ENCODE measurements at regions of chr1 and their contacts with region 1.

Region 1: DNA sequence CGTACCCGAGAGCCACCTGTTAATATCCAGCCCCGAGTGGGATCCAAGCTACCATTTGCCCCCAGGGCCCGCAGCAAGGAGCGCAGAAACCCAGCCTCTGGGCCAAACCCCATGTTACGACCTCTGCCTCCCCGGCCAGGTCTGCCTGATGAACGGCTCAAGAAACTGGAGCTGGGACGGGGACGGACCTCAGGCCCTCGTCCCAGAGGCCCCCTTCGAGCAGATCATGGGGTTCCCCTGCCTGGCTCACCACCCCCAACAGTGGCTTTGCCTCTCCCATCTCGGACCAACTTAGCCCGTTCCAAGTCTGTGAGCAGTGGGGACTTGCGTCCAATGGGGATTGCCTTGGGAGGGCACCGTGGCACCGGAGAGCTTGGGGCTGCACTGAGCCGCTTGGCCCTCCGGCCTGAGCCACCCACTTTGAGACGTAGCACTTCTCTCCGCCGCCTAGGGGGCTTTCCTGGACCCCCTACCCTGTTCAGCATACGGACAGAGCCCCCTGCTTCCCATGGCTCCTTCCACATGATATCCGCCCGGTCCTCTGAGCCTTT is 1.4 kb downstream of the USP21 start:
- DNase-seq: no peak
- ATAC-seq: no peak
- H3K4me3 ChIP-seq: no peak overlapping the region
- H3K27ac ChIP-seq: no peak overlapping the region
- H3K4me1 ChIP-seq: peaks cover 7% of the 10 kb centered on the region
- H3K27me3 ChIP-seq: no peaks in the 10 kb centered on the region
- CTCF ChIP-seq: no peak
- POLR2A ChIP-seq: no peak
- RAD21 ChIP-seq: no peak

Region 2: GRCh38 chr1:161238039-161238473 is 77.3 kb after region 1 on chr1 and contains the start of gene NR1I3:
- CTCF ChIA-PET with region 1: no interaction called
- POLR2A ChIA-PET with region 1: no interaction called
- dilution Hi-C with region 1: no loop called
- in situ Hi-C with region 1: no loop called
- intact Hi-C with region 1: no loop called
- DNase-seq: no peak
- ATAC-seq: no peak
- H3K4me3 ChIP-seq: no peak within 1 kb of the TSS
- H3K27ac ChIP-seq: no peak within 1 kb of the TSS
- H3K4me1 ChIP-seq: no peaks in the 10 kb centered on the region
- H3K27me3 ChIP-seq: peaks cover 12% of the 10 kb centered on the region
- CTCF ChIP-seq: no peak
- POLR2A ChIP-seq: no peak
- RAD21 ChIP-seq: no peak
- total RNA-seq, gene NR1I3: not detected in 2 replicates

Region 3: DNA sequence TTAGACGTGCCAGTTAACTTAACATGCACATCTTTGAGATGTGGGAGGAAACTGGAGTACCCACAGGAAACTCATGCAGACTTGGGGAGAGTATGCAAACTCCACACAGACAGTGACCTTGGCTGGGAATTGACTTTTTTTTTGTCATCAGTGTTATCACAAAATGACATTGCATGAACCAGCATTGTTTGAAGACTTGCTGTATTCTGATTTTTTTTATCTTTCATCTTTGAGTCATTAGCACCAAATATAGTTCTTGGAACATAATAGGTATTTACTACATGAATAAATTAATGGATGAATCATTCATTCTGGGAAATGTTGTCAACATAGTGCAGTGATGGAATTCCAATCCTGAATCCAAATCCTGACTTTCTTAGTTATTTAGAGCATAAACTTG is 682.4 kb after region 1 on chr1:
- CTCF ChIA-PET with region 1: no interaction called
- POLR2A ChIA-PET with region 1: interaction called, 10 read pairs
- dilution Hi-C with region 1: no loop called
- in situ Hi-C with region 1: no loop called
- intact Hi-C with region 1: no loop called
- DNase-seq: no peak
- ATAC-seq: peak; percentile 27
- H3K4me3 ChIP-seq: no peak overlapping the region
- H3K27ac ChIP-seq: no peak overlapping the region
- H3K4me1 ChIP-seq: peaks cover 3% of the 10 kb centered on the region
- H3K27me3 ChIP-seq: no peaks in the 10 kb centered on the region
- CTCF ChIP-seq: no peak
- POLR2A ChIP-seq: no peak
- RAD21 ChIP-seq: no peak